Activated B cell treated with CpG ODN at 0.5 μM for 24 hours (primary cell): ENCODE measurements at regions of chr14 and their contacts with region 1.

Region 1: GRCh38 chr14:89416002-89416995 is 734 bp downstream of the FOXN3 start:
- DNase-seq: peak; percentile 100
- ATAC-seq: peak; percentile 64
- H3K4me3 Mint-ChIP-seq: peak overlapping the region; percentile 92
- H3K27ac Mint-ChIP-seq: peak overlapping the region; percentile 95
- H3K4me1 Mint-ChIP-seq: peaks cover 48% of the 10 kb centered on the region
- H3K27me3 Mint-ChIP-seq: no peaks in the 10 kb centered on the region
- CTCF ChIP-seq: no peak

Region 2: DNA sequence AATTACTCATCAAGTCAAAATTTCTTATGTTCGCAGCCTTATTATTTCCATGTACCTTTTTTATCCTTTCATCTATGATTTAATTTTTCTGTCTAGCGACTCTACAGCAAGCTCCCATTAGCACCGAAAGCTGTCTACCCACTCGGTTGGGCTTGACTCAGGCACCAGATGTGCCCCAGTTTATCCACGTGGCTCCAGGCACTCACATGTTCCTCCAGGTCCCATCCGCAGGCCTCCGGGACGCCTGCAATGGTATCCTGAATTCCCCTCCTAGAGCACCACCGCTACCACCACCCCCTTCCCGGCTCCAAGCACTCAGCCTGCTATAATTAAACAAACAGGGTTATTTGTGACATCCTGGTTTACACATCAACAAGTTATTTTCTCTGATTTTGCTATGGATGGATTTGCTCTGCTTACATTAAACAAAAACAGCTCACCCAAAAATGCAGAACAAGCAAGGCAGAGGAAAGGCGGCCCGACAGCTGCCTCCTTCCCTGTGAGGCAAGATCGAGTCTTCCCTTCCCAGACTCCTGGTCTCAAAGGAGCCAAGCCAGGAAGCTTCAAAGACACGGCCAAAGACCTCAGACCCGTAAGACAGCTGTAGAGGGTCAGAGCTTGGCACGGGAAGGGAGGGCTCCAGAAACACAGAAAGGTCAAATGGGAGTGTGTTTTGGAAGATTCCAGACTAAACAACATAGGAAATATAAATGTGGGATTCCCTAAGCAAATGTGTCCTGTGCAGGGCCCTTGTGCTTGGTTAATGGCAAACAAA is 338.1 kb before region 1 on chr14:
- CTCF ChIA-PET with region 1: no interaction called
- POLR2A ChIA-PET with region 1: no interaction called
- intact Hi-C with region 1: no loop called
- DNase-seq: no peak
- ATAC-seq: no peak
- H3K4me3 Mint-ChIP-seq: no peak overlapping the region
- H3K27ac Mint-ChIP-seq: no peak overlapping the region
- H3K4me1 Mint-ChIP-seq: no peaks in the 10 kb centered on the region
- H3K27me3 Mint-ChIP-seq: peaks cover 8% of the 10 kb centered on the region
- CTCF ChIP-seq: no peak

Region 3: DNA sequence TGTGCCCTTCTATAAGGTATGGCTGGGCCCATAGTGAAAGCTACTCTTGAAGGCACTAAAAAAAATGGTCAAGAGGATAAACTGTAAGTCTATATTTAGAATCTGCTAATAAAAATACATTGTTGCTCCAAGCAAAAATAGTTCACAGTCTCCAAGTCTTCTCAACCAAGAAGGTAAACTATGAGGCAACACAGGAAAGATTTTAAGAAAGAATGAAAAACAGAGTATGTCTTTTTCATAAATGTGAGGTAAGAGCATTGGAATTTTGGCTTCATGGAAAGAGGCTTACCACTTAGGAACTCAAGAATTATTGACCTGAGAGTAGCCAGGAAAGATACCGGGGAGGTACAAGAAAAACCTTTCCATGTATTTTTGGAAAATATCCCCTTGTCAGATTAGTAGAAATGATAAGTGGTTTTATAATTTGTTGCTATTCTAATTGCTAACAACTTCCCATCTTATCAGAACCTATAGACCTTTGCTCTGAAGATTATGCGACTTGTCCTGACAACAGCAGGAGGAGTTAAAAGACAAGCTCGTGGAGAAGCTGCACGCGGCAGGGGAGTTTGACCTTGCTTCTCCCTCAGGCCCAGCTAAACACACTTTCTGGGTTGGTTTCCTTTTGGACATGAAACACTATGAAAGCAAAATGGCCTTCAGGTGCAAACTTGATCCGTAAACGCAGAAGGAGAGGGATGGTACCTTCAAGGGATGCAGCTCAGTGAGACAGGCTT is 237.3 kb before region 1 on chr14:
- CTCF ChIA-PET with region 1: interaction called, 10 read pairs
- POLR2A ChIA-PET with region 1: interaction called, 3 read pairs
- intact Hi-C with region 1: loop called (anchors 1 kb)
- DNase-seq: no peak
- ATAC-seq: no peak
- H3K4me3 Mint-ChIP-seq: no peak overlapping the region
- H3K27ac Mint-ChIP-seq: peak overlapping the region; percentile 31
- H3K4me1 Mint-ChIP-seq: peaks cover 19% of the 10 kb centered on the region
- H3K27me3 Mint-ChIP-seq: no peaks in the 10 kb centered on the region
- CTCF ChIP-seq: no peak

Region 4: GRCh38 chr14:89303457-89304435 is 112.6 kb before region 1 on chr14:
- CTCF ChIA-PET with region 1: no interaction called
- POLR2A ChIA-PET with region 1: interaction called, 17 read pairs
- intact Hi-C with region 1: loop called (anchors 1 kb)
- DNase-seq: peak; percentile 57
- ATAC-seq: peak; percentile 63
- H3K4me3 Mint-ChIP-seq: peak overlapping the region; percentile 89
- H3K27ac Mint-ChIP-seq: peak overlapping the region; percentile 99
- H3K4me1 Mint-ChIP-seq: peaks cover 77% of the 10 kb centered on the region
- H3K27me3 Mint-ChIP-seq: no peaks in the 10 kb centered on the region
- CTCF ChIP-seq: no peak

Region 5: DNA sequence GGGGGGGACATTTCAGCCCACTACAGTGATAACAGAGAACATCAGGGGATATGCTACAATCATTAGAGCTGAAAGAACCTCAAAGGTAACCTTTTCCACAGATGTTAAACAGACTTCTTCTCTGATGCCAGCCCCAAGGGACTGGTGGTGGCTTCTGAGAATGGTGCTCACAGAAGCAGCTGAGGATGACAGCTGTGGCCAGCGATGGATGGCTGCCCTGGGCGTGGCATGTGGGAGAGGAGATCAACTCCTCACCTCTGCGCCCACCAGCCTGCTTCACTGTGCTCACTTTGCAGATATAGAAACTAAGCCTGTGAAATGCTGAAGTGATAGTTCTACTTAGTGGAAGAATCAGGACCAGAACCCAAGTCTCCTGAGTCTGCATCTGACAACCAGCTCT is 32.3 kb before region 1 on chr14:
- CTCF ChIA-PET with region 1: interaction called, 6 read pairs
- POLR2A ChIA-PET with region 1: interaction called, 34 read pairs
- intact Hi-C with region 1: loop called (anchors 1 kb)
- DNase-seq: peak; percentile 79
- ATAC-seq: peak; percentile 95
- H3K4me3 Mint-ChIP-seq: peak overlapping the region; percentile 36
- H3K27ac Mint-ChIP-seq: peak overlapping the region; percentile 87
- H3K4me1 Mint-ChIP-seq: peaks cover 79% of the 10 kb centered on the region
- H3K27me3 Mint-ChIP-seq: no peaks in the 10 kb centered on the region
- CTCF ChIP-seq: no peak

Region 6: DNA sequence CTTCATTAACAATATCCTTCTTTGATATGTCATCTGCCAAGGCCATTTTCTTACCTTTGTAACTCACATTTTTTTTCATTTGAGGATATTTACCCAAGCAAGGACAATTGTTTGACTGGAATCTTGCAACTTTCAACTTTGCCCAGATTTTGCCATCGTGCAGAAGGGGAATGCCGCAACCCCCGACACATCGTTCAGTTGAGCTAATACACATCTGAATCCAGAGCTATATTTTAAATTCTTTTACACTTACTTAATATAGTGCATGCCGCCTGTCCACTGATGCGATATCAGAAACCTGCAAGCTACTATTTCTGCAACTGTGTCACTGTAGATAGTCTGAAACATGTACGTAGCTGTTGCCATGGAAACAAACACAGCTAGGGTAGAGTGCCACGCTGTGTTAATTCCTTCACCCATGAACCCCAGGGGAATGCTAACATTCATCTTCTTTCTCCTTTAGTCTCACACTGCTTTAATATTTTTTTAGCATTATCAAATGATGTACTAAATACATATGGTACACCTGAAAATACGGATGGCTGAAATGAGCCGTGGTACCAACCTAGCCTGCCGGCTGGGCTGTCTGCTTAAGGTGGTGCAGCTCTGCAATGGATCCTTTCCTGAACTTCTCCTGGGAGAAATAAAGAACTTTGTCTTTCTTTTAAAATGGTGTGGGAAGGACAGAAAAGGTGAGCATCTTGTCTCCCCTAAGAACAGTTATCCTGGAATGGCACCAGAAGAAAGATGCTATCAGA is 77.8 kb after region 1 on chr14:
- CTCF ChIA-PET with region 1: interaction called, 4 read pairs
- POLR2A ChIA-PET with region 1: interaction called, 5 read pairs
- intact Hi-C with region 1: loop called (anchors 1 kb)
- DNase-seq: peak; percentile 23
- ATAC-seq: peak; percentile 99
- H3K4me3 Mint-ChIP-seq: peak overlapping the region; percentile 73
- H3K27ac Mint-ChIP-seq: peak overlapping the region; percentile 88
- H3K4me1 Mint-ChIP-seq: peaks cover 26% of the 10 kb centered on the region
- H3K27me3 Mint-ChIP-seq: no peaks in the 10 kb centered on the region
- CTCF ChIP-seq: no peak

Region 7: GRCh38 chr14:89720741-89721315 is 304.5 kb after region 1 on chr14:
- CTCF ChIA-PET with region 1: interaction called, 3 read pairs
- POLR2A ChIA-PET with region 1: interaction called, 4 read pairs
- intact Hi-C with region 1: loop called (anchors 2 kb)
- DNase-seq: peak; percentile 45
- ATAC-seq: peak; percentile 90
- H3K4me3 Mint-ChIP-seq: peak overlapping the region; percentile 69
- H3K27ac Mint-ChIP-seq: peak overlapping the region; percentile 95
- H3K4me1 Mint-ChIP-seq: peaks cover 66% of the 10 kb centered on the region
- H3K27me3 Mint-ChIP-seq: no peaks in the 10 kb centered on the region
- CTCF ChIP-seq: no peak

Region 8: DNA sequence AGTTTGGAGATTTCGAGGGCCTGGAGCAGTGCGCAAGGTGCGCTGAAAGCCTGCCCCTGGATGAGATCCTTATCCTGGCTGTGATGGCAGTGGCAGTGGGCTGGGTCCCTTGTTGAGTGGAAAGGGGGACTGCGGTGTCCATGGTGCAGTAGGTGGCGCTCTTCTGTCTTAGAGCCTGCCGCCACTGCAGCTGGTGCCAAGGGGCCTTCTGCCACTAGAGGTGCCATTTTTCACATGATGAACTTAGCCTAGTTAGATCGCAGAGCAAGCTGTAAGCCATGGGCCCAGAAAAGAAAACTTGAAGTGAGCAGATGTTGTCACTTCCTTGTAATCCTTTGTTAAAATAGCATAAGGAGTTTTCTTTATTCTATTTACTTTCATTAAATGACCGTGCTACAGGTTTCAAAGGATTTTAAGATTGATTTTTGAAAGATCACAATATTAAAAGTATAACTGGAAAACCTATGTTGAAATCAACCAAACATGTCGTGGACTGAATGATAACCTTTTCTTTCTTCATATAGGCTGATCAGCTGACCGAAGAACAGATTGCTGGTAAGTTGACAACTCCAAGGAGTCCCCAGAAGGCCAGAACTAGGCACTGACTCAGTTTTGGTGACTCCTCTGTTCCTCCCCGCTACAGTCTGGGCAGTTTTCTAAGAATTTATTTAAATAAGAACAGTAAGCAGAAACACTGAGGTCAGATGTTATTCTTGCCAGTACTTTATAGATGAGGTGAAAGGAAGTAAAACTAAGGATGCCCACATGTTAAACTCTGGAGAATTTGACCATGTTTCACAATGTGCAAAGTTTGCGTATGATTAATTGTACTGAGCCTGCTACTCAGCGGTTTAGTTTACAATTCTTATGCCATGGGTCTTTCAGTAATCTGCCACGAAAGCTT is 983.5 kb after region 1 on chr14:
- CTCF ChIA-PET with region 1: no interaction called
- POLR2A ChIA-PET with region 1: no interaction called
- intact Hi-C with region 1: loop called (anchors 2 kb)
- DNase-seq: peak; percentile 63
- ATAC-seq: peak; percentile 46
- H3K4me3 Mint-ChIP-seq: peak overlapping the region; percentile 91
- H3K27ac Mint-ChIP-seq: peak overlapping the region; percentile 98
- H3K4me1 Mint-ChIP-seq: peaks cover 47% of the 10 kb centered on the region
- H3K27me3 Mint-ChIP-seq: no peaks in the 10 kb centered on the region
- CTCF ChIP-seq: peak; percentile 78